Activated CD4-positive, alpha-beta memory T cell treated with anti-CD3 and anti-CD28 coated beads for 36 hours (primary cell): ENCODE measurements at regions of chr12 and their contacts with region 1.

Region 1: GRCh38 chr12:30847259-30847658 is 79.3 kb upstream of the TSPAN11 start:
- DNase-seq: no peak
- H3K4me3 Mint-ChIP-seq: no peak overlapping the region
- H3K27ac Mint-ChIP-seq: no peak overlapping the region
- H3K4me1 Mint-ChIP-seq: peaks cover 6% of the 10 kb centered on the region
- H3K27me3 Mint-ChIP-seq: no peaks in the 10 kb centered on the region

Region 2: GRCh38 chr12:29519585-29520182 is 1327.6 kb before region 1 on chr12:
- CTCF ChIA-PET with region 1: interaction called, 3 read pairs
- POLR2A ChIA-PET with region 1: no interaction called
- intact Hi-C with region 1: loop called (anchors 1 kb)
- DNase-seq: no peak
- H3K4me3 Mint-ChIP-seq: no peak overlapping the region
- H3K27ac Mint-ChIP-seq: no peak overlapping the region
- H3K4me1 Mint-ChIP-seq: no peaks in the 10 kb centered on the region
- H3K27me3 Mint-ChIP-seq: peaks cover 9% of the 10 kb centered on the region

Region 3: DNA sequence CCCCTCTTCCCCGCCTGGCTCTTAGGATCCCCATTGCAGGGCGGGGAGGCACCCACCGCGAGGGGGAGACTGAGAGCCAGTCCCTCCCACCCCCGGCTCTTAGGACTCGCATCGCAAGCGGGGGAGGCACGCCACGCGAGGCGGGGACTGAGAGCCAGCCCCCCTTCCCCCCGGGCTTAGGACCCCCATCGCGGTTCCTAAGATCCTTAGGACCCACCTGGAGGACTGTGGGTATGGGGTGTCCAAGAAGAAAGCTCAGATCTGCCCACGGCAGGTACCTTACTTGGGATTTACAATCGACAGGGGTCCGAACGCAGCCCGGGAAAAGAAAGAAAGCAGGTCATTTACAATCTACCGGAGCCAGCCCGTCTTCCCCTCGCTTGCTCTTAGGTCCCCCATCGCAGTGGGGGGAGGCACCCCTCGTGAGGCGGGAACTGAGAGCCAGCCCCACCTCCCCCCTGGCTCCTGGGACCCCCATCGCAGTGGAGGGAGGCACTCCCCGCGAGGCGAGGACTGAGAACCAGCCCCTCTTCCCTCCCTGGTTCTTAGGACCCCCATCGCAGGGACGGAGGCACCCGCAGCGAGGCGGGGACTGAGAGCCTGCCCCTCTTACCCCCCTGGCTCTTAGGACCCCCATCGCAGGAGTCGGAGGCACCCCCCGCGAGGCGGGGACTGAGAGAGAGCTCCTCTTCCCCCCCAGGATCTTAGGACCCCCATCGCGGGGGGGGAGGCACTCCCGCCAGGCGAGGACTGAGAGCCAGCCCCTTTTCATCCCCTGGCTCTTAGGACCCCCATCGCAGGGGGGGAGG is 270.1 kb after region 1 on chr12:
- CTCF ChIA-PET with region 1: no interaction called
- POLR2A ChIA-PET with region 1: no interaction called
- intact Hi-C with region 1: loop called (anchors 5 kb)
- DNase-seq: peak; percentile 70
- H3K4me3 Mint-ChIP-seq: peak overlapping the region; percentile 64
- H3K27ac Mint-ChIP-seq: no peak overlapping the region
- H3K4me1 Mint-ChIP-seq: peaks cover 16% of the 10 kb centered on the region
- H3K27me3 Mint-ChIP-seq: peaks cover 35% of the 10 kb centered on the region

Region 4: GRCh38 chr12:31238764-31239387 is 391.6 kb after region 1 on chr12:
- CTCF ChIA-PET with region 1: interaction called, 69 read pairs
- POLR2A ChIA-PET with region 1: no interaction called
- intact Hi-C with region 1: loop called (anchors 1 kb)
- DNase-seq: peak; percentile 84
- H3K4me3 Mint-ChIP-seq: no peak overlapping the region
- H3K27ac Mint-ChIP-seq: no peak overlapping the region
- H3K4me1 Mint-ChIP-seq: peaks cover 10% of the 10 kb centered on the region
- H3K27me3 Mint-ChIP-seq: peaks cover 12% of the 10 kb centered on the region

Region 5: GRCh38 chr12:31631784-31632183 is 784.5 kb after region 1 on chr12:
- CTCF ChIA-PET with region 1: no interaction called
- POLR2A ChIA-PET with region 1: no interaction called
- intact Hi-C with region 1: loop called (anchors 1 kb)
- DNase-seq: no peak
- H3K4me3 Mint-ChIP-seq: no peak overlapping the region
- H3K27ac Mint-ChIP-seq: no peak overlapping the region
- H3K4me1 Mint-ChIP-seq: peaks cover 4% of the 10 kb centered on the region
- H3K27me3 Mint-ChIP-seq: peaks cover 1% of the 10 kb centered on the region